Posterior cingulate gyrus (tissue), 11 donors: ENCODE measurements at regions of chr12 and their contacts with region 1.

Region 1: DNA sequence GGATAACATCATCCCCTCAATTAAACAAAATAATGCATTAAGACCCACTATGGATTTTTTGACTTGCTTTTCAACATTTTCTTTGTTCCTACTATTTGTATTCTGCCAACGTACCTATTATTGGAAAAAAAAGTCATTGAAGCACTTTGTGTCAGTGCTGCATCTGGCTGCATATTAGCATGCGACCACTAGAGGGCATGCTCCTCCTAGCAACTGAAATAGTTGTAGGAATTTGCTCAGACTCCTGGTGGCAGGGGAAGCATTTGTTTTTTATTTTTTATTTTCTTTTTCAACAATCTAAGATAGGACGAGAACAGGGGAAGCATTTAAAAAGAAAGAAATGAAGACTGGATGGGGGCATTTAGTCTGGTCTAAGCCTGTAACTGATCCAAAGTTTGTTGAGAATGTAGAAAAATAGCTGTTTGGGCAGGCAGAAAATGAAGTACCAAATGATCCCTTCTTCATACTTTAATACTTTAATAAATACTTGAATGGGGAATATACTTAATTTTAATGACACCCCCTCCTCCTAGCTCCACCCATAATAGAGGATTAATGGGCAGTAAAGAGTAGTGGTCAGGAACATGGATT is 14.5 kb upstream of the CLEC4A start:
- DNase-seq: peak; percentile 52 to 94 (median 84)

Region 2: DNA sequence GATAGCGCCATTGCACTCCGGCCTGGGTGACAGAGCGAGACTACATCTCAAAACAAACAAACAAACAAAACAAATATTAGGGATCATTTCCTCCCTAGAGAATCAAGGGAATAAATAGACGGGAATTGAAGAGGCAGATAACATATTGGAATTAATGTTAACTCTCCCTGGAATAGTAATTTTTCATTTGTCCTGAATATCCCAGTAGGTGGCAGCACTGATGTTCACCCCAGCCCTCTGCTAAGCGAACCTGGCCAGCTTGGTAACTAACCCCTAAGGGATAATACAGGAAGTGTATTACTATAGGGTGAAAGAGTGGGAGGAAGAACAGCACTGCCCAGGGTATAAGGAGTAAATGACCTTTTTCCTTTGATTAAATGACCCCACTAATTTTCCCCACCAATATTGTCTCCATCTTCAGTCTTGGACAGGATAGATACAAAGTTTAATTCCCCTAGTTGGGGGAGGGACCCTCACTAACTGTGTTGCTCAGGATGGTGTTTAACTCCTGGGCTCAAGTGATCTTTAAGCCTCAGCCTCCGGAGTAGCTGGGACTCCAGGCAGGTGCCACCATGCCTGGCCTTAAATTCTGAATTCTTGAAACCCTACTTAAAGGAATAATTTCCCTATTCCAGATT is 276.7 kb before region 1 on chr12:
- intact Hi-C with region 1: no loop called
- DNase-seq: peak in 1 of 10 donors; percentile 27

Region 3: GRCh38 chr12:7907009-7907408 is 201.9 kb before region 1 on chr12:
- intact Hi-C with region 1: no loop called
- DNase-seq: no peak

Region 4: DNA sequence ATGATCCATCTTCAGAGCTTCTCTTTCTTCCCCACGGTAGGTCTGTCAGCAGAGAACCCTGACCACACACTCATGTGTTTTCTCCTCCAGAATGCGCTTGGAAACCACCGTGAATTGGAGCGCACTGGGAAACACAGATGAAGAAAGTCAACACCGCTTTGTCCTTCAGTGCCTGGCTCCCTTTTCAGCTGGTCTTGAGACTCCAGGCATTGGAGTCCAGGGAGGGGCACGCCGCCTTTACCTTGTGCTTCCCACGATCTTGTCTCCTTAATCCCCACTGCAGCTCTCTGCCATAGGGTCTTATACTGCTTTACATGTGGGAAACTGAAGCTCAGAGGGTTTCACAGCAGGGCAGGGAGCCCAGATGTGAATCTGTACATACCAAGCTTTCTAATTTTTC is 117.5 kb after region 1 on chr12:
- intact Hi-C with region 1: loop called (anchors 5 kb)
- DNase-seq: no peak